Right ventricle myocardium inferior (tissue), 1 donor: ENCODE measurements at regions of chr4 and their contacts with region 1.

Region 1: GRCh38 chr4:39977489-39978377 is at the start of gene PDS5A:
- DNase-seq: peak; percentile 94
- ATAC-seq: peak; percentile 94
- total RNA-seq, gene PDS5A: 32.6 TPM

Region 2: GRCh38 chr4:39458505-39459300 is 519.0 kb before region 1 on chr4 and contains the starts of genes LIAS and RPL9:
- intact Hi-C with region 1: loop called (anchors 2 kb)
- DNase-seq: peak; percentile 97
- ATAC-seq: peak; percentile 97
- total RNA-seq, gene LIAS: 29.5 TPM
- total RNA-seq, gene RPL9: 828 TPM

Region 3: DNA sequence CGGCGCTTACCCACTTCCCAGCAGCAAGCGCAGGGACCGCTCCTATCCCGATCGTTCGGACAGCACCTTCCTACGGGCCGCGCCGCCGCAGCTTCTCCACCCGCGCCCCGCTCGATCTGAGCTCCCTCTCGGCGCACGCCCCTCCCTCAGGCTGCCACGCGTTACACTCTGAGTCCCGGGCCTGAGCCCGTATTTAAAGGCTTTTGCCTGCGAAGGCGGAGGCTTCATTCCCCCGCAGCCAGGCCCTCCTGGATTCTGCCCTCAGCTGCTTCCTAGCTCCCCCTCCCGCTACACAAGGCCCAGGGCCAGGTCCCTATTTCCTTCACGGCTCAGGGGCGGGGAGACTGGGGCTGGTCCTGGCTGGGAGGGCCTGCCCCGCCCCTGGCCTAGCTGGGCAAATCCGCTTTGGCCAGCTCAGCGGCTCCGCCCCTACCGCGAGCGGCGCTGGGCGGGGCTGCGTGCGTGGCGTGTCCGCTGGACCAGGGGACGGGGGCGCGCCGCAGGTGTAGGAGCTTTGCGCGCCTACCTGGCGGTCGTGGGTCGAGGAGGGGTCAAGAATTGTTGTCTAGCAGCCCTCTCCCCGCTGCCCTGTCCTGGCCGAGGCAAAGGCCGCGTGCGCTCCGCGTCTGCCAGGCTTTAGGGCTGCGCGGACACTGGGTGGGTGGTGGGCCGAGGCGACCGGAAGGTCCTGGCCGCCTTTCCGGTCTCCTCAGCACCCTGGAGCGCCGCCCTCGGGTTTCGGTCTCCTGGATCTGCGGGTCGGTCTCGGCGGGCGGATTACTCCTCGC is 450.3 kb before region 1 on chr4 and contains the start of gene UGDH:
- intact Hi-C with region 1: loop called (anchors 1 kb)
- DNase-seq: peak; percentile 98
- ATAC-seq: peak; percentile 99
- total RNA-seq, gene UGDH: 16.6 TPM

Region 4: GRCh38 chr4:39697740-39698423 is 279.9 kb before region 1 on chr4 and contains the start of gene UBE2K:
- intact Hi-C with region 1: loop called (anchors 1 kb)
- DNase-seq: peak; percentile 95
- ATAC-seq: peak; percentile 100
- total RNA-seq, gene UBE2K: 56.6 TPM